CD4-positive, alpha-beta T cell (primary cell): ENCODE measurements at regions of chr1 and their contacts with region 1.

Region 1: GRCh38 chr1:7752512-7753417 is 18.3 kb upstream of the VAMP3 start:
- DNase-seq: peak; percentile 17 to 77 (median 39)
- ATAC-seq: peak; percentile 61
- H3K4me3 ChIP-seq: no peak overlapping the region
- H3K4me3 Mint-ChIP-seq: peak overlapping the region; percentile 71
- H3K27ac ChIP-seq: no peak overlapping the region
- H3K27ac Mint-ChIP-seq: no peak overlapping the region
- H3K4me1 ChIP-seq: peaks cover 20% of the 10 kb centered on the region
- H3K4me1 Mint-ChIP-seq: peaks cover 32% of the 10 kb centered on the region
- H3K27me3 ChIP-seq: no peaks in the 10 kb centered on the region
- H3K27me3 Mint-ChIP-seq: peaks cover 12% of the 10 kb centered on the region
- CTCF ChIP-seq: peak; percentile 90

Region 2: DNA sequence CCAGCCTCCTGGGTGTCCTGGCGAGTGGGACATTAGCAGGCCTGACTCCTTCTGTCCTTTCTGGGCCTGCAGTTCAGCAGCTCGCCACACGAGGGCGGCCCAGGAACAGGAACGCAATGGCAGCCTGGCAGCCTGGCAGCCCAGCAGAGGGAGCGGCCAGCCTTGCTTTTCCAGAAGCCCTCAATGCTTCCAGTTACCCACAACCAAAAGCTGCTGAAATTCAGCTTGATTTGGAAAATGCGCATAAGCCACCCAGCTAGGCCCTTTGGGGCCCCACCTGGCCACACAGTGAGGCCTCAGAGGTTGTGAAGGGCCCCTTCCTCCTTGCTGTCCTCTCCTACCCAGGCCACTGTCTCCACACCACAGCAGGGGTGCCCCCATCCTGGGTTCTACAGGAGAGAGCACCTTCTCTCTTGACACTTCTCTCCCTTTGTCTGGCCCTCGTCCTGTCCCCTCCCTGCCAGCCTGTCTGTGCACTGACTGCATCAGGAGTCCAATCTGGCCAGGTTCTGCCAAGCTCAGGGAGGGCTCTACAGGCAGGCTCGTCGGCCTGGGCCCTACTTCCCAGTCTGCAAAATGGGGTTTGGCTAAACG is 85.0 kb before region 1 on chr1:
- CTCF ChIA-PET with region 1: interaction called, 83 read pairs
- POLR2A ChIA-PET with region 1: interaction called, 22 read pairs
- intact Hi-C with region 1: loop called (anchors 1 kb)
- DNase-seq: peak; percentile 67 to 88 (median 81)
- ATAC-seq: peak; percentile 79
- H3K4me3 ChIP-seq: no peak overlapping the region
- H3K4me3 Mint-ChIP-seq: no peak overlapping the region
- H3K27ac ChIP-seq: no peak overlapping the region
- H3K27ac Mint-ChIP-seq: no peak overlapping the region
- H3K4me1 ChIP-seq: peaks cover 21% of the 10 kb centered on the region
- H3K4me1 Mint-ChIP-seq: no peaks in the 10 kb centered on the region
- H3K27me3 ChIP-seq: no peaks in the 10 kb centered on the region
- H3K27me3 Mint-ChIP-seq: no peaks in the 10 kb centered on the region
- CTCF ChIP-seq: peak; percentile 99

Region 3: DNA sequence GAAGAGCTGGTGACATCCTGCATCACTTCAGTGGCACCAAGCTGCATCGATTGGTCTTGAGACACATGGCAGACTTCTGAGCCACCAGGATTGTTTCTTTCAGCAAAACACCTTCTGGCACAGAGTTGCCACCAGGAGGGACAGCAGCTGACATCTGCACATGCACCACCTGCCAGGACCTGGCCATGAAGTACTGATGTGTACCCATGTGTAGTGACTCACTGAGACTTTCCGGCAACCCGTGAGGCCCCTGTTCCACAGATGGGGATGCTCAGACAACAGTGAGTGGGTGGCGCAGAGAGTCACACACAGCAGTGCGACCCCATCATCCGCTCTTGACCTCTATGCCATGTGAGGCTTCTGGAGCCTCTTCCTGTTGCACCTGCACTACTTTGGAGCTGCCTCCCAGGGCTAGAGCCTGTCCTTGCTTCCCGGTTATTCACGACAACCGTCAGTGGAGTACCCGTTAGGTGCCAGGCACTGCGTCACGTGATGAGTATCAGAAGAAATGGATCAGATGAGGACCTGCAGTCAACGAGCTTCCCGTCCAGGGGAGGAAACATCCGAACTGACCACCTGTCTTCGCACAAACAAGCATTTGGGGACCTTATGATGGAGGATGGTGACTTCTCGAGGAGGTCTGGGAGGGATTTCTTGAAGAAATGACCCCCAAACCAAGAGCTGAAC is 62.1 kb before region 1 on chr1:
- CTCF ChIA-PET with region 1: no interaction called
- POLR2A ChIA-PET with region 1: no interaction called
- intact Hi-C with region 1: no loop called
- DNase-seq: no peak
- ATAC-seq: no peak
- H3K4me3 ChIP-seq: no peak overlapping the region
- H3K4me3 Mint-ChIP-seq: no peak overlapping the region
- H3K27ac ChIP-seq: no peak overlapping the region
- H3K27ac Mint-ChIP-seq: no peak overlapping the region
- H3K4me1 ChIP-seq: no peaks in the 10 kb centered on the region
- H3K4me1 Mint-ChIP-seq: no peaks in the 10 kb centered on the region
- H3K27me3 ChIP-seq: peaks cover 0 to 5% of the 10 kb centered on the region in 2 experiments
- H3K27me3 Mint-ChIP-seq: peaks cover 16% of the 10 kb centered on the region
- CTCF ChIP-seq: no peak

Region 4: GRCh38 chr1:8259498-8260290 is 506.9 kb after region 1 on chr1:
- CTCF ChIA-PET with region 1: no interaction called
- POLR2A ChIA-PET with region 1: no interaction called
- intact Hi-C with region 1: no loop called
- DNase-seq: no peak
- ATAC-seq: no peak
- H3K4me3 ChIP-seq: no peak overlapping the region
- H3K4me3 Mint-ChIP-seq: no peak overlapping the region
- H3K27ac ChIP-seq: no peak overlapping the region
- H3K27ac Mint-ChIP-seq: no peak overlapping the region
- H3K4me1 ChIP-seq: no peaks in the 10 kb centered on the region
- H3K4me1 Mint-ChIP-seq: no peaks in the 10 kb centered on the region
- H3K27me3 ChIP-seq: no peaks in the 10 kb centered on the region
- H3K27me3 Mint-ChIP-seq: peaks cover 14% of the 10 kb centered on the region
- CTCF ChIP-seq: no peak